Activated B cell treated with CpG ODN at 0.5 μM for 24 hours (primary cell): ENCODE measurements at regions of chr4 and their contacts with region 1.

Region 1: DNA sequence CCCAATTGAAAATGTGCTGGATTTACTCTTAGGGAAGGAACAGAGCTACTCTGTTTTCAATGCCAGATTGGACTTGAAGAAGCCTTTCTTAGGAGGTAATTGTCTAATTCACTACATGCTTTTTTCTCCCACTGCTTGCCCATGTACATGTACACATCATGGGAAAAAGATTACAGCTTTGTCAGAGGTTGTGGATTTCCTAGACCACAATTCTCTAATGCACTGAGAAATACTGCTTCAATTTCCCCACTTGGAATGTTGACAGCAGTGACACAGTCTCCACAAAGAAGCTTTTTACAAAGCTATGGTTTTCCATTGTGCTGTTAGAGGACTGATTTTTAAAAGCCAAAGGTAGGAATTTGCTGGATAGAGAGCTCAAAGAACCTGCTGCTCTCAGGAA is 19.5 kb downstream of the ZAR1 start:
- DNase-seq: no peak
- ATAC-seq: no peak
- H3K4me3 Mint-ChIP-seq: no peak overlapping the region
- H3K27ac Mint-ChIP-seq: no peak overlapping the region
- H3K4me1 Mint-ChIP-seq: no peaks in the 10 kb centered on the region
- H3K27me3 Mint-ChIP-seq: no peaks in the 10 kb centered on the region
- CTCF ChIP-seq: no peak

Region 2: DNA sequence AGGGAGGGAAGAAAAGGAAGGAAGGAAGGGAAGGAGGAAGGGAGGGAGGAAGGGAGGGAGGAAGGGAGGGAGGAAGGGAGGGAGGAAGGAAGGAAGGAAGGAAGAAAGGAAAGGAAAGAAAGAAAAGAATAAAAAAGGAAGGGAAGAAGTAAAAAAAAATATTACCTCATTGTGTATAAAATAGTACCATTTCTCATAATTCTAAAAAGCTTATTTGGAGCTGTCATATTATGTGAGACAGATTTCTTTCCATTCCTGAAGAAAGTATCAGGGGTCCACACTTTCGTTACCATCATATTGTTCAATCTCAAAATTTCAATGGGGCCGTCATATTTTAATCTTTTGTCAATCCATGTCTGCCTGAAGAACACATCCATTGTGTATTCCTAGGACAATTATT is 1532.3 kb before region 1 on chr4:
- CTCF ChIA-PET with region 1: no interaction called
- POLR2A ChIA-PET with region 1: interaction called, 12 read pairs
- intact Hi-C with region 1: no loop called
- DNase-seq: no peak
- ATAC-seq: no peak
- H3K4me3 Mint-ChIP-seq: no peak overlapping the region
- H3K27ac Mint-ChIP-seq: no peak overlapping the region
- H3K4me1 Mint-ChIP-seq: peaks cover 2% of the 10 kb centered on the region
- H3K27me3 Mint-ChIP-seq: no peaks in the 10 kb centered on the region
- CTCF ChIP-seq: no peak

Region 3: GRCh38 chr4:48546336-48546735 is 36.8 kb after region 1 on chr4:
- CTCF ChIA-PET with region 1: no interaction called
- POLR2A ChIA-PET with region 1: no interaction called
- intact Hi-C with region 1: loop called (anchors 5 kb)
- DNase-seq: no peak
- ATAC-seq: no peak
- H3K4me3 Mint-ChIP-seq: no peak overlapping the region
- H3K27ac Mint-ChIP-seq: no peak overlapping the region
- H3K4me1 Mint-ChIP-seq: no peaks in the 10 kb centered on the region
- H3K27me3 Mint-ChIP-seq: no peaks in the 10 kb centered on the region
- CTCF ChIP-seq: no peak